GM12878 (cell line): ENCODE measurements at regions of chr1 and their contacts with region 1.

Region 1: DNA sequence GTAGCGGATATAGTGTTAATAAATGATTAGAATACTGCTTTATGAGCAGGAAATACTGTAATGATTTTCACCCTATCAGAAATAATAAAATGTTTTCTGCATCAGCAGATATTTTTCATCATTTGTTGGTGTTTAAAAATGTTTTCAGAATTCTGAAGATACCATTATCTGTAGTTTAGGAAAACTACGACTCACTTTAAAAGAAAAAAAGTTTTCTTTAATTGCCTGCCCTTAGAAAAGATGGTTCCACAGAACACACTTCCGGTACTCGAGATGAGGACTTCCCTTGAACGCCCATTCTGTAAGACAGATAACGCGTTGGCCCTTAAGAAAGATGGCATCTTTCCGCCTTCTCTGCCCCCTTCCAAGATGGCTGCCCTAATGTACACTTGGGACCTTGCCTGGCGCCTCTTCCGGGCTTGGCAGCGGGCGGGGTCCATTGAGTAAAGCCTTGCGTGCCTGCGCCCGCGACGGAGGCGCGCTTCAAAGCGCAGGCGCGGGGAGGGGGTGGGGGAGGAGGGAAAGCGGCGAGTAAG is at the start of gene SZRD1:
- DNase-seq: peak; percentile 100
- ATAC-seq: peak; percentile 89
- H3K4me3 ChIP-seq: peak within 1 kb of the TSS; percentile 91
- H3K27ac ChIP-seq: peak within 1 kb of the TSS; percentile 96
- H3K4me1 ChIP-seq: peaks cover 3% of the 10 kb centered on the region; the same call in 1 of the 2 replicates
- H3K27me3 ChIP-seq: no peaks in the 10 kb centered on the region
- CTCF ChIP-seq: no peak
- EP300 ChIP-seq: no peak
- POLR2A ChIP-seq: no peak
- RAD21 ChIP-seq: no peak
- polyA plus RNA-seq, gene SZRD1: 5.6 to 14.7 TPM

Region 2: GRCh38 chr1:16078925-16079656 is 287.7 kb before region 1 on chr1:
- CTCF ChIA-PET with region 1: interaction called, 104 read pairs
- POLR2A ChIA-PET with region 1: interaction called, 4 read pairs
- RAD21 ChIA-PET with region 1: interaction called, 24 read pairs
- SMC1A ChIA-PET with region 1: interaction called, 29 read pairs
- in situ Hi-C with region 1: loop called (anchors 5 kb)
- intact Hi-C with region 1: loop called (anchors 2 kb)
- DNase-seq: peak; percentile 49
- ATAC-seq: peak; percentile 88
- H3K4me3 ChIP-seq: peak overlapping the region; percentile 38; the same call in 1 of the 2 replicates
- H3K27ac ChIP-seq: peak overlapping the region; percentile 0; the same call in 1 of the 2 replicates
- H3K4me1 ChIP-seq: peaks cover 8% of the 10 kb centered on the region
- H3K27me3 ChIP-seq: no peaks in the 10 kb centered on the region
- CTCF ChIP-seq: peak; percentile 92 to 95 (median 93)
- EP300 ChIP-seq: no peak
- POLR2A ChIP-seq: no peak
- RAD21 ChIP-seq: peak; percentile 88

Region 3: DNA sequence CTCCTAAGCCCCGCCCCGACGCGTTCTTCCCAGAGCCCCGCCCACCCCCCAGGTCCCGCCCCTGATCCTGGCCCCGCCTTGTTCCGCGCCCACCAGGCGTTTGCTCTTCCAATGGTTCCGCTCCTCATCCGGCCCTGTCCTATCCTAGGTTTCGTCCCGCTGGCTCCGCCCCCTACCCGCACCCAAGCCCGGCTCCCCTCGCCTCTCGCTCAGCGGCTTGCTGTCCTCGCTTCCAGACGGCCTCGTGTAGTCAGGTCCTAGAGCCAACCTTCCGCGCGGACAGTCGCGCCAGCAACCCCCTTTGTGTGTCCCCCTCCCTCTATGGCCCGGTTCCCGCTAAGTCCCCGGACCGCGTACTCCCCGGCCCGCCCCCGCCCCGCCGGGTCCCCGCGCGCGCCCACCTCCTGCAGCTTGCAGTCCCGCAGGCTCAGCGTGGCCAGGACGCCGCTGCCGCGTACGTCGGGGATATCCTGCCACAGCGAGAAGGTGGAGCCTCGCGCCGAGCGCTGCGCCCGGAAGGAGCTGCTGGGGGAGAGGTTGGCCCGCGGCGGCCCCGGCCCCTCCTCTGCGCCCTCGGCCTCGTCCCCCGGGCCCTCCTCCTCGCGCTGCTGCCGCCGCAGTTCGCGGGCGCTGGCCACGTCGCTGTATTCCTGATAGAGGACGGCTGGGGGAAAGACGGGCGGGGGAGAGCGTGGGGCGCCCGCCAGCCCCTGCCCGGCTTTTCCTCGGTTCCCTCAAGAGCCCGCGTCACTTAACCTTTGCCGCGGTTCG is 160.1 kb before region 1 on chr1:
- CTCF ChIA-PET with region 1: interaction called, 17 read pairs
- POLR2A ChIA-PET with region 1: interaction called, 3 read pairs
- RAD21 ChIA-PET with region 1: no interaction called
- SMC1A ChIA-PET with region 1: no interaction called
- in situ Hi-C with region 1: no loop called
- intact Hi-C with region 1: loop called (anchors 5 kb)
- DNase-seq: peak; percentile 71
- ATAC-seq: peak; percentile 93
- H3K4me3 ChIP-seq: peak overlapping the region; percentile 68
- H3K27ac ChIP-seq: peak overlapping the region; percentile 28; the same call in 1 of the 2 replicates
- H3K4me1 ChIP-seq: peaks cover 4% of the 10 kb centered on the region; the same call in 1 of the 2 replicates
- H3K27me3 ChIP-seq: no peaks in the 10 kb centered on the region
- CTCF ChIP-seq: no peak
- EP300 ChIP-seq: no peak
- POLR2A ChIP-seq: peak; percentile 87
- RAD21 ChIP-seq: no peak

Region 4: DNA sequence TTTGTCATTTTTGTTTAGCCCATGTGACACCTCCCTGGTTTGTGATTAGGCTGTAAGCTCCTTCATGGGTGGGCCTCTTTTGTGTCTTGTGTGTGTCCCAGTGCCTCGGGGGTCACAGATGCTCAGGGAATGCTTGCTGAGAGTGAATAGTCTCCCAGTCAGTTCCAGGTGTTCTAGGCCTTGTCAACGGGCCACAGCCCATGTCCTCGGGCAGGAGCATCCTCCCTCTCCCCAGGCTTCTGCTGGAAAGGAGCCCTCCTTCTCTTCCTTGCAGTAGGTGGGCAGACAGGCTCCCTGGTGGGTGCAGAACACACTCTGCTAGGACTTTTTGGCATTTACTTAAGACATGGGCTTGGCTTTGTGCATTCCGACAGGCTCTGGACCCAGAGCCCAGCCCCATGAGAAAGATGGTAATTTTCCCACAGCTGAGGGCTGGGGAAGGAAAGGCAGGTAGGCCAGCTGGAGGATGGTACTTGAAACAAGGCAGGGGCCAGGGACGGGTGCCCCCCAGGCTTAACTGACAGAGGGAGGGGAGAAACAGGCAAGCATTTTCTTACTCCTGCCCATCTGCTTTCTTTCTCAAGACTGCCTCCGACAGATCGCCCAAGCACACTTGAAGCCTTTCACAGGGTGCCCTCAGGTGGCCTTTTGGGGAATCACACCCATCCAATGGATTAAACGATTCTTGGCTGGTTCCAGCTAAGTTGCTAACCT is 122.7 kb before region 1 on chr1:
- CTCF ChIA-PET with region 1: interaction called, 27 read pairs
- POLR2A ChIA-PET with region 1: no interaction called
- RAD21 ChIA-PET with region 1: interaction called, 7 read pairs
- SMC1A ChIA-PET with region 1: interaction called, 22 read pairs
- in situ Hi-C with region 1: no loop called
- intact Hi-C with region 1: loop called (anchors 5 kb)
- DNase-seq: peak; percentile 21
- ATAC-seq: peak; percentile 88
- H3K4me3 ChIP-seq: no peak overlapping the region
- H3K27ac ChIP-seq: no peak overlapping the region
- H3K4me1 ChIP-seq: peaks cover 11% of the 10 kb centered on the region
- H3K27me3 ChIP-seq: no peaks in the 10 kb centered on the region
- CTCF ChIP-seq: peak; percentile 91 to 94 (median 91)
- EP300 ChIP-seq: no peak
- POLR2A ChIP-seq: no peak; the same call in 1 of the 2 replicates
- RAD21 ChIP-seq: peak; percentile 93

Region 5: DNA sequence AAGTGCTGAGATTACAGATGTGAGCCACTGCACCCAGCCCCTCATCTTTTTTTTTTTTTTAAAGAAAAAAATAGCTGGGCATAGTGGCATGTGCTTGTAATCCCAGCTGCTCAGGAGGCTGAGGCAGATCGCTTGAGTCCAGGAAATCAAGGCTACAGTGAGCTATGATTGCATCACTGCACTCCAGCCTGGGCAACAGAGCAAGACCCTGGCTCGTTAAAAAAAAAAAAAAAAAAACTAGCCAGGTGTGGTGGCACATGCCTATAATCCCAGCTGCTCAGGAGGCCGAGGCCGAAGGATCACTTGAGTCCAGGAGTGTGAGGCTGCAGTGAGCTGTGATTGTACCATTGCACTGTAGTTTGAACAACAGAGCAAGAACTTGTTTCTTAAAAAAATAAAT is 14.1 kb after region 1 on chr1:
- CTCF ChIA-PET with region 1: interaction called, 30 read pairs
- POLR2A ChIA-PET with region 1: interaction called, 34 read pairs
- RAD21 ChIA-PET with region 1: interaction called, 3 read pairs
- SMC1A ChIA-PET with region 1: interaction called, 37 read pairs
- in situ Hi-C with region 1: no loop called
- intact Hi-C with region 1: no loop called
- DNase-seq: no peak
- ATAC-seq: no peak
- H3K4me3 ChIP-seq: no peak overlapping the region
- H3K27ac ChIP-seq: no peak overlapping the region
- H3K4me1 ChIP-seq: peaks cover 5% of the 10 kb centered on the region
- H3K27me3 ChIP-seq: no peaks in the 10 kb centered on the region
- CTCF ChIP-seq: no peak
- EP300 ChIP-seq: no peak
- POLR2A ChIP-seq: no peak
- RAD21 ChIP-seq: no peak

Region 6: GRCh38 chr1:16420424-16421118 is 53.8 kb after region 1 on chr1:
- CTCF ChIA-PET with region 1: interaction called, 3 read pairs
- POLR2A ChIA-PET with region 1: interaction called, 9 read pairs
- RAD21 ChIA-PET with region 1: interaction called, 14 read pairs
- SMC1A ChIA-PET with region 1: interaction called, 7 read pairs
- in situ Hi-C with region 1: no loop called
- intact Hi-C with region 1: no loop called
- DNase-seq: peak; percentile 84
- ATAC-seq: peak; percentile 97
- H3K4me3 ChIP-seq: peak overlapping the region; percentile 23; the same call in 1 of the 2 replicates
- H3K27ac ChIP-seq: no peak overlapping the region
- H3K4me1 ChIP-seq: peaks cover 18% of the 10 kb centered on the region
- H3K27me3 ChIP-seq: no peaks in the 10 kb centered on the region
- CTCF ChIP-seq: no peak
- EP300 ChIP-seq: no peak
- POLR2A ChIP-seq: no peak
- RAD21 ChIP-seq: no peak

Region 7: GRCh38 chr1:16498573-16499413 is 132.0 kb after region 1 on chr1:
- CTCF ChIA-PET with region 1: no interaction called
- POLR2A ChIA-PET with region 1: no interaction called
- RAD21 ChIA-PET with region 1: no interaction called
- SMC1A ChIA-PET with region 1: no interaction called
- in situ Hi-C with region 1: no loop called
- intact Hi-C with region 1: loop called (anchors 5 kb)
- DNase-seq: peak; percentile 32
- ATAC-seq: peak; percentile 98
- H3K4me3 ChIP-seq: peak overlapping the region; percentile 87
- H3K27ac ChIP-seq: no peak overlapping the region
- H3K4me1 ChIP-seq: peaks cover 3% of the 10 kb centered on the region; the same call in 1 of the 2 replicates
- H3K27me3 ChIP-seq: no peaks in the 10 kb centered on the region; a peak in 1 of 4 replicates
- CTCF ChIP-seq: peak in 1 of 3 experiments; percentile 26; a peak in 2 of 6 replicates
- EP300 ChIP-seq: no peak
- POLR2A ChIP-seq: peak; percentile 61; the same call in 1 of the 2 replicates
- RAD21 ChIP-seq: no peak